Activated CD4-positive, alpha-beta memory T cell treated with anti-CD3 and anti-CD28 coated beads for 36 hours (primary cell): ENCODE measurements at regions of chr15 and their contacts with region 1.

Region 1: GRCh38 chr15:75732809-75733451 is 20.3 kb upstream of the CSPG4 start:
- DNase-seq: peak; percentile 74
- H3K4me3 Mint-ChIP-seq: no peak overlapping the region
- H3K27ac Mint-ChIP-seq: no peak overlapping the region
- H3K4me1 Mint-ChIP-seq: peaks cover 8% of the 10 kb centered on the region
- H3K27me3 Mint-ChIP-seq: peaks cover 6% of the 10 kb centered on the region

Region 2: GRCh38 chr15:75758071-75758872 is 25.3 kb after region 1 on chr15:
- CTCF ChIA-PET with region 1: interaction called, 10 read pairs
- POLR2A ChIA-PET with region 1: no interaction called
- intact Hi-C with region 1: no loop called
- DNase-seq: peak; percentile 83
- H3K4me3 Mint-ChIP-seq: peak overlapping the region; percentile 94
- H3K27ac Mint-ChIP-seq: peak overlapping the region; percentile 91
- H3K4me1 Mint-ChIP-seq: peaks cover 14% of the 10 kb centered on the region
- H3K27me3 Mint-ChIP-seq: no peaks in the 10 kb centered on the region

Region 3: GRCh38 chr15:75821786-75822345 is 88.9 kb after region 1 on chr15:
- CTCF ChIA-PET with region 1: no interaction called
- POLR2A ChIA-PET with region 1: no interaction called
- intact Hi-C with region 1: no loop called
- DNase-seq: no peak
- H3K4me3 Mint-ChIP-seq: no peak overlapping the region
- H3K27ac Mint-ChIP-seq: no peak overlapping the region
- H3K4me1 Mint-ChIP-seq: peaks cover 6% of the 10 kb centered on the region
- H3K27me3 Mint-ChIP-seq: peaks cover 3% of the 10 kb centered on the region